ENCODE measurements at regions of chr19 and their contacts with region 1.

Region 1: GRCh38 chr19:43555185-43555770 is 20.0 kb downstream of the XRCC1 start:
- DNase-seq: peak; percentile 53
- H3K4me3 ChIP-seq: no peak overlapping the region
- H3K27ac ChIP-seq: no peak overlapping the region
- H3K4me1 ChIP-seq: no peaks in the 10 kb centered on the region
- H3K27me3 ChIP-seq: no peaks in the 10 kb centered on the region
- CTCF ChIP-seq: peak; percentile 84 to 95

Region 2: DNA sequence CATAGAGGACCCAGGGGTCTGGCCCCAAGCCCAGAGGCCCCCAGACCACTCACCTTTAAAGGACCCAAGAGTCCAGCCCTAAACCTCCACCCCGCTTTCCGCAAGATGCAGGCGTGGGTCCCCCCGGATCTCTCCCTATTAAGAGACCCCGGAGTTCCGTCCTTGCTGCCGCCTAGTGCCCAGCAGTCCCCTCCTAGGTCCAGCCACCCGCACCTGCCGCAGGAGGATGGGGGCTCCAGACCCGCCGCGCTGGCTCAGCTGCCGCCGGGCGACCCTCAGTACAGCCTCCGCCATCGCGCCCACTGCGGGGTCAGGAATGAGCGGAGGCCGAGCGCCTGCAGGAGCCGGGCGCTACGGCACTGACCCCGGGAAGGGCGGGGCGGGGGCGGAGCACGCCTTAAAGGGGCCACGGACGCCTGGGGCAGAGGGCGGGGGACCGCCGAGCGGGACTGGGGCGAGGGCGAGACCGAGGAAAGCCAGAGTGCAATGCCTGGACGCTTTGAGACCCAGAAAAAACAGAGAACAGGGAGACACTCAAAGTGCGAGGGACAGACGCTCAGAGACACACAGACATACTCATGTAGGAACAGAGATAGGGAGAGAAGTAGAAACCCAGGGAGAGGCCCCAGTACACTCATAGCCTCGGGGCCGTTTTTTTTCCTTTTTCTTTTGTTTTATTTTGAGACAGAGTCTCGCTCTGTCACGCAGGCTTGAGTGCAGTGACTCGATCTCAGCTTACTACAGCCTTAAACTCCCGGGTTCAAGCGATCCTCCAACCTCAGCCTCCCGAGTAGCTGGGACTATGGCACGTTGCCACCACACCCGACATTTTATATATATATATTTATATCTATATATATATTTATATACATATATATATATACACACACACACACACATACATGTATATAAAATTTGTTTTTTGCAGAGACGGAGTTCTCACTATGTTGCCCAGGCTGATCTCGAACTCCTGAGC is 28.1 kb before region 1 on chr19 and contains the start of gene ETHE1:
- CTCF ChIA-PET with region 1: interaction called, 22 read pairs
- dilution Hi-C with region 1: no loop called
- in situ Hi-C with region 1: no loop called
- intact Hi-C with region 1: no loop called
- DNase-seq: peak; percentile 78
- H3K4me3 ChIP-seq: peak within 1 kb of the TSS; percentile 75 to 90 (median 90)
- H3K27ac ChIP-seq: peak within 1 kb of the TSS; percentile 71
- H3K4me1 ChIP-seq: peaks cover 37% of the 10 kb centered on the region
- H3K27me3 ChIP-seq: no peaks in the 10 kb centered on the region
- CTCF ChIP-seq: no peak
- total RNA-seq, gene ETHE1: 114 to 122 TPM